ENCODE measurements at regions of chr15 and their contacts with region 1.

Region 1: GRCh38 chr15:74768771-74769342 is 13.0 kb upstream of the CSK start:
- DNase-seq: no peak
- H3K4me3 ChIP-seq: peak overlapping the region; percentile 25
- CTCF ChIP-seq: peak; percentile 75

Region 2: DNA sequence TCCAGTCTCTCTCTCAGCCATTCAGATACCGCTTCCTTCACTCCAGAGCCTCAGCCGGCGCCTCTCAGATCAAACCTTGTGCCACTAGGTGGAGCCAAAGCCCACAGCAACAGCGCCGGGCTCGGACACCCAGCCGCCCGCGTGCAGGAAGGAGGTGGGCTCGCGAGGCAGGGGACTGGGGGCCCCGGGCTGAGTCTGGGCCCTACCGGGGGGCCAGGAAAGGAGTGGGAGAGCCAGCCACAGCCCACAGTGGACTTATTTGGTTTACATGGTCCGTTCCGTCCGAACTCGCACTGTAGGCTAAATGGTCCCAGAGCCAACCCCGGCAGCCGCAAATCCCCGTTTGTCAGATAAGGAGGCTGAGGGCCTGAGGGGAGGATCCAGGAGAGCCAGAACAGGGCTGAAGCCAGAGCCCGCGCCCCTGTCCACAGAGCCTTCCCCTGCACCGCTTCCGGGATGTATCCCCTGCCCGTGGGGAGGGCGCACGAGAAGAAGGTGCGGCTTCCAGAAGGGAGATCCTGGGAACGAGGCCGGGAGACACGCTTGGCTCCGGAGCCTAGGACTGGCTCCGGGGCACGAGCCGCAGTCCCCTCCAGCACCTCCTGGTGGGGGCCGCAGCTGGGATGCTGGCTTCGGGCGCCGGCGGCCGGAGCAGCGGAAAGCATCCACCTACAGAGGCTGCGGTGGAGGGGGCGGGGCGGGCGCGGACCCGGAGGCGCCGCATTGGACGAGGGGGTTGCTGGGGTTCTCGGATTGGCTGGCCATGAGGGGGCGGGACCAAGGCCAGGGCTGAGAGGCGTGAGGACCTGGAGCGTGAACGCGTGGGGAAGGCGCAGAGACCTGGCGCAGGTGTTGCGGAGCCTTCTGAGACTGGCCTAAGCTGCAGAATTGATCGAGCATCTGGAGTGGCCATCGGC is 394.9 kb before region 1 on chr15:
- CTCF ChIA-PET with region 1: interaction called, 115 read pairs
- POLR2A ChIA-PET with region 1: no interaction called
- DNase-seq: no peak
- H3K4me3 ChIP-seq: peak overlapping the region; percentile 75
- CTCF ChIP-seq: peak; percentile 93

Region 3: GRCh38 chr15:74511583-74511982 is 257.3 kb before region 1 on chr15:
- CTCF ChIA-PET with region 1: no interaction called
- POLR2A ChIA-PET with region 1: no interaction called
- DNase-seq: no peak
- H3K4me3 ChIP-seq: no peak overlapping the region
- CTCF ChIP-seq: no peak

Region 4: GRCh38 chr15:74752491-74753020 is 16.3 kb before region 1 on chr15:
- CTCF ChIA-PET with region 1: interaction called, 141 read pairs
- POLR2A ChIA-PET with region 1: no interaction called
- DNase-seq: peak; percentile 60
- H3K4me3 ChIP-seq: no peak overlapping the region
- CTCF ChIP-seq: no peak

Region 5: DNA sequence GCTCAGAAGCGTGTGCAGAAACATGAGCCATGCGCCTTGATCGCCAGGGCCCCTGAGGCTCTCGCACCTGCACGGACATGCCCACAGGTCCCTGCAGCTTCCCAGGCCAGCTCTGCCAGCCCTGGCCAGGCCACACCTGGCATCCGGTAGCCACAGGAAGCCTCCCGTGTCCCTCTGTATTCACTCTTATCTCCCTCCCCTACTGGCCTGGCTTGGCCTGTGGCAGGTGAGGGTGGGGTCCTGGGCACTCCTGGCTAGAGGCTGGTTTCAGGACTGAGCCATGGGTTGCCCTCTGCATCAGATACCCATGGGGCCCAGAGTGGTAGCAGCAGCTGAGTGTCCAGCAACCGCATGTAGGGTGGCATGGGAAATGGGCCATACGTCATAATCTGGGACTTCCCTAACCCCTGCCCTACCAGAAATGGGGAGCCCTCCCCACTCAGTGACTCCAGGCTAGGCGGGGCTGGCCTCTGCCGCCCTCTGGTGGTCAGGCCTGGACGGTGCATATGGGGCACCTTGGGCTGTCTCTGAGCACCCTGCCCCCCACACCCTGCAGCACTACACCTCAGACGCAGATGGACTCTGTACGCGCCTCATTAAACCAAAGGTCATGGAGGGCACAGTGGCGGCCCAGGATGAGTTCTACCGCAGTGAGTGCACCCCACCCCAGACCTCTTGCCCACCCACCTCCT is 31.1 kb after region 1 on chr15:
- CTCF ChIA-PET with region 1: interaction called, 106 read pairs
- POLR2A ChIA-PET with region 1: no interaction called
- DNase-seq: no peak
- H3K4me3 ChIP-seq: no peak overlapping the region
- CTCF ChIP-seq: peak; percentile 97

Region 6: GRCh38 chr15:74842581-74843444 is 74.0 kb after region 1 on chr15 and contains the start of gene ULK3:
- CTCF ChIA-PET with region 1: interaction called, 53 read pairs
- POLR2A ChIA-PET with region 1: no interaction called
- DNase-seq: no peak
- H3K4me3 ChIP-seq: peak within 1 kb of the TSS; percentile 87
- CTCF ChIP-seq: peak; percentile 71